Activated CD4-positive, alpha-beta memory T cell treated with anti-CD3 and anti-CD28 coated beads for 36 hours (primary cell): ENCODE measurements at regions of chr17 and their contacts with region 1.

Region 1: DNA sequence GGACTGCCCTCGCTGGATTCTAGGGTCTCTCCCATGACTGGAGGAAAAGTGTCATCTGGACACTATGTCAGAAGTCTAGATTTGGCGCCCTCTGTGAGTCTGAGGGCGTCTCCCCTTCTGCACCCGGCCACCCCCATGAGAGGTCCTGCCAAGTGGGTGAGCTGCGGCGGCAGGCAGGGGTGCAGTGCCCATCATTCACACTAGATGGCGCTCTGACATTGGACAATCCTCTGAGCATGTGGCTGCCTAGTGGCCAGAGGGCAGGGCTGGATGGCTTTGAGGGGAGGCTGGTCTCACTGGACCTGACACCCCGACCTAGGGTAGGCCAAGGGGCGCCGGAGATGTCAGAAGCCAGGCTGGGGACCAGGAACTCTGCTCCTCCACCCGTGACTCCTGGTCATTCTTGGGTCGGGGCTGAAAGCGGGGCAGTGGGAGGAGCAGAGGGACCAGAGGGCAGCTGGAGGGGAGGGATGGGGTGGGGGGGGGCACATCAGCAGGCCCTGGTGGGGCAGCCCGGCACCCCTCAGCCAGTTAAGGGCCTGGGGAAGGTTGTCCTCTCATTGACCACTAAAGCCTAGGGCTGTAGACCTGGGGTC is 28.0 kb downstream of the MRM1 start:
- DNase-seq: peak; percentile 86
- H3K4me3 Mint-ChIP-seq: no peak overlapping the region
- H3K27ac Mint-ChIP-seq: no peak overlapping the region
- H3K4me1 Mint-ChIP-seq: no peaks in the 10 kb centered on the region
- H3K27me3 Mint-ChIP-seq: peaks cover 6% of the 10 kb centered on the region

Region 2: GRCh38 chr17:36614933-36615332 is 14.4 kb before region 1 on chr17:
- CTCF ChIA-PET with region 1: interaction called, 12 read pairs
- POLR2A ChIA-PET with region 1: no interaction called
- intact Hi-C with region 1: no loop called
- DNase-seq: no peak
- H3K4me3 Mint-ChIP-seq: no peak overlapping the region
- H3K27ac Mint-ChIP-seq: no peak overlapping the region
- H3K4me1 Mint-ChIP-seq: no peaks in the 10 kb centered on the region
- H3K27me3 Mint-ChIP-seq: no peaks in the 10 kb centered on the region

Region 3: DNA sequence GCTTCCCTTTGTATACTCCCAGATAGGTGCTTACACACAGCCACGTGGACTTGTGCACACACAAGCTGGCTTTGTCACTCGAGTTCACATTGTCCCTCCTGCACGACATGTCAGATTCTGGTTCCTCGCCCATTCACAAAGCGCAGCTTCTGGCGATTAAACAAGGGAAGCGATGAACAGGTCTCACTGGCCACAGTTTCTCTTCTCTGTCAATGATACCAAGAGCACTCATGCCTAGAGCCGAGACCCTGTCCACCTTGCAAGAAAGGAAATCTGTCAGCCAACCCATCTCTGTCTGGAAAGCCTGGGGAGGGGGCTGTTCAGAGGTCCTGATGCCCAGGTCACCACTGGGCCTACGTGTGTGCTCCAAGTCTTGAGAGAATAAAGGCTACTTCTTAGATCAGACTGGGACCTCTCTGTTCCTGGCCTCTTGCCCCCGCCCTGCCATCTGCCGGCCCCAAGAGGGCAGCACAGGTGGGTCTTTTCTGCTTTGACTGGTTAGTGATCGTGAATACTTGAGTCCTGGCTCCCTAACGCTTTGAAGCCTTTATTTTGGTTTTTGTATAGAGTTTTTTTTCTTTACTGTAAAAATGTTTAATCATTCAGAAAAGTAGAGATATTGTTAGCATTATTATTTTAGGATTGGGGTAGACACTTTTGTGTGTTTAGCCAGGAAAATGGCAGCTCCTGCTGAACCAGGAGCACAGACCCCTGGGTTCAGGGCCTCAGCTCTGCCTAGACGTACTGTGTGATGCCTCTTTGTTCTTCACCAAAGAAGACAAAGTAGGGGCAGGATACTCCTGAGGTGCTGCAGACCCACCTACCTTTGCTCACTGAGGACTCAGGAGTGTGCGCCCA is 76.8 kb after region 1 on chr17:
- CTCF ChIA-PET with region 1: interaction called, 14 read pairs
- POLR2A ChIA-PET with region 1: no interaction called
- intact Hi-C with region 1: loop called (anchors 5 kb)
- DNase-seq: peak; percentile 67
- H3K4me3 Mint-ChIP-seq: no peak overlapping the region
- H3K27ac Mint-ChIP-seq: no peak overlapping the region
- H3K4me1 Mint-ChIP-seq: no peaks in the 10 kb centered on the region
- H3K27me3 Mint-ChIP-seq: peaks cover 28% of the 10 kb centered on the region

Region 4: GRCh38 chr17:36722121-36722902 is 93.0 kb after region 1 on chr17:
- CTCF ChIA-PET with region 1: no interaction called
- POLR2A ChIA-PET with region 1: no interaction called
- intact Hi-C with region 1: no loop called
- DNase-seq: peak; percentile 90
- H3K4me3 Mint-ChIP-seq: peak overlapping the region; percentile 78
- H3K27ac Mint-ChIP-seq: peak overlapping the region; percentile 97
- H3K4me1 Mint-ChIP-seq: peaks cover 42% of the 10 kb centered on the region
- H3K27me3 Mint-ChIP-seq: no peaks in the 10 kb centered on the region

Region 5: GRCh38 chr17:36755586-36755985 is 126.2 kb after region 1 on chr17:
- CTCF ChIA-PET with region 1: interaction called, 37 read pairs
- POLR2A ChIA-PET with region 1: no interaction called
- intact Hi-C with region 1: loop called (anchors 10 kb)
- DNase-seq: peak; percentile 58
- H3K4me3 Mint-ChIP-seq: no peak overlapping the region
- H3K27ac Mint-ChIP-seq: no peak overlapping the region
- H3K4me1 Mint-ChIP-seq: no peaks in the 10 kb centered on the region
- H3K27me3 Mint-ChIP-seq: no peaks in the 10 kb centered on the region

Region 6: GRCh38 chr17:37047631-37048104 is 418.3 kb after region 1 on chr17:
- CTCF ChIA-PET with region 1: interaction called, 67 read pairs
- POLR2A ChIA-PET with region 1: no interaction called
- intact Hi-C with region 1: loop called (anchors 1 kb)
- DNase-seq: peak; percentile 89
- H3K4me3 Mint-ChIP-seq: no peak overlapping the region
- H3K27ac Mint-ChIP-seq: peak overlapping the region; percentile 54
- H3K4me1 Mint-ChIP-seq: peaks cover 10% of the 10 kb centered on the region
- H3K27me3 Mint-ChIP-seq: no peaks in the 10 kb centered on the region

Region 7: GRCh38 chr17:37373530-37374159 is 744.3 kb after region 1 on chr17:
- CTCF ChIA-PET with region 1: interaction called, 8 read pairs
- POLR2A ChIA-PET with region 1: no interaction called
- intact Hi-C with region 1: loop called (anchors 10 kb)
- DNase-seq: peak; percentile 83
- H3K4me3 Mint-ChIP-seq: no peak overlapping the region
- H3K27ac Mint-ChIP-seq: no peak overlapping the region
- H3K4me1 Mint-ChIP-seq: peaks cover 6% of the 10 kb centered on the region
- H3K27me3 Mint-ChIP-seq: no peaks in the 10 kb centered on the region